Head of caudate nucleus (tissue), 42 donors: ENCODE measurements at regions of chr17 and their contacts with region 1.

Region 1: GRCh38 chr17:54256401-54256929 is 433.7 kb downstream of the KIF2B start:
- DNase-seq: no peak

Region 2: GRCh38 chr17:54307351-54307750 is 50.9 kb after region 1 on chr17:
- intact Hi-C with region 1: loop called (anchors 10 kb)
- DNase-seq: no peak